ENCODE measurements at regions of chr17 and their contacts with region 1.

Region 1: GRCh38 chr17:81651692-81652091 is 4.7 kb downstream of the PDE6G start:
- DNase-seq: peak; percentile 90
- H3K4me3 ChIP-seq: no peak overlapping the region
- H3K27ac ChIP-seq: no peak overlapping the region
- H3K4me1 ChIP-seq: 0 out of 2 replicates have a peak, but pooled peaks cover 3% of the 10 kb centered on the region
- H3K27me3 ChIP-seq: peaks cover 15% of the 10 kb centered on the region; the same call in 1 of the 2 replicates

Region 2: GRCh38 chr17:81445642-81446503 is 205.8 kb before region 1 on chr17:
- in situ Hi-C with region 1: no loop called
- DNase-seq: no peak
- H3K4me3 ChIP-seq: no peak overlapping the region
- H3K27ac ChIP-seq: no peak overlapping the region
- H3K4me1 ChIP-seq: no peaks in the 10 kb centered on the region
- H3K27me3 ChIP-seq: no peaks in the 10 kb centered on the region

Region 3: DNA sequence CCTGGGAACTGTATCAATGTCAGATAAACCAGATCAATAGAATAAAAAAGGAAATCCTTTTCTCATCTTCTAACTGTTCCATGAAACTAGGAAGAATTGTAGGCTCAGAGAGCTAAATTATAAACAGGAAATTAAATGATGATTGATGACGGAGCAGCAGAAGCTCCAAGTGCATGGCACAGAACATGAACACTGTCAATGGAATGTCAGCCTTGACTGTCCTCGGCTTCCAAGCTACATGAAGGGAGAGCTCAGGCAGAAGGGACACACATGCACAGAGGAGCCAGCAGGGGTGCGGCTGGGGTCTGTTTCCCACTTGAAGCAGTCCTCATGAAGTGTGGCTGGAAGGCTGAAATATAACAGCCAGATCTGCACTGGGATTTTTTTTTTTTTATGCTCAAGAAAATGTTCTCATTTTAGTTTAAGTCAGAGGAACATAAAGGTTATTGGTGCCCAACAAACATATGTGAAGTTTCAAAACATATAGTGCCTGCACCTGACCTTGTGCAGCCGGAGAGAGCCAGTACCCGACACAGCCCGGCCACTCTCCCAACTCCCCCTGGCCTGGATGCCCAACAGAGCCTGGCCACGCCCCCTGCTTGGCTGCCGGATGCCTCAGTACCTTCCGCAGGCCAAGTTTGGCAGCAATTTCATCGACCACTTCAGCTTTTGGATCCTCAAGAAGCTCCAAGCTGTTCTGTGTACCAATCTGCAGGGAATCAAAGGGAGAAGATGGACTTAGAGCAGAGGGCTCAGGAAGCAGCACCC is 51.8 kb before region 1 on chr17:
- in situ Hi-C with region 1: loop called (anchors 10 kb)
- DNase-seq: peak; percentile 88
- H3K4me3 ChIP-seq: peak overlapping the region; percentile 1; the same call in 1 of the 2 replicates
- H3K27ac ChIP-seq: peak overlapping the region; percentile 38
- H3K4me1 ChIP-seq: peaks cover 31% of the 10 kb centered on the region
- H3K27me3 ChIP-seq: no peaks in the 10 kb centered on the region

Region 4: GRCh38 chr17:81711814-81712467 is 60.2 kb after region 1 on chr17 and contains the start of gene SLC25A10:
- in situ Hi-C with region 1: no loop called
- DNase-seq: peak; percentile 90
- H3K4me3 ChIP-seq: peak within 1 kb of the TSS; percentile 76
- H3K27ac ChIP-seq: peak within 1 kb of the TSS; percentile 45
- H3K4me1 ChIP-seq: peaks cover 16% of the 10 kb centered on the region
- H3K27me3 ChIP-seq: no peaks in the 10 kb centered on the region
- total RNA-seq, gene SLC25A10: 10.9 and 16.9 TPM in 2 replicates

Region 5: GRCh38 chr17:83078378-83079351 is 1427.0 kb after region 1 on chr17:
- in situ Hi-C with region 1: no loop called
- DNase-seq: peak; percentile 63
- H3K4me3 ChIP-seq: peak overlapping the region; percentile 67
- H3K27ac ChIP-seq: peak overlapping the region; percentile 6; the same call in 1 of the 2 replicates
- H3K4me1 ChIP-seq: peaks cover 13% of the 10 kb centered on the region
- H3K27me3 ChIP-seq: no peaks in the 10 kb centered on the region